ENCODE measurements at regions of chr5 and their contacts with region 1.

Region 1: GRCh38 chr5:95178046-95178651 is 106.7 kb downstream of the MCTP1 start:
- DNase-seq: peak; percentile 91
- H3K4me3 ChIP-seq: no peak overlapping the region
- H3K27ac ChIP-seq: peak overlapping the region; percentile 28
- H3K4me1 ChIP-seq: peaks cover 5% of the 10 kb centered on the region
- H3K27me3 ChIP-seq: no peaks in the 10 kb centered on the region
- CTCF ChIP-seq: peak; percentile 53 to 70
- POLR2A ChIP-seq: no peak

Region 2: GRCh38 chr5:95027151-95027721 is 150.9 kb before region 1 on chr5:
- CTCF ChIA-PET with region 1: interaction called, 5 read pairs
- POLR2A ChIA-PET with region 1: no interaction called
- dilution Hi-C with region 1: no loop called
- intact Hi-C with region 1: loop called (anchors 5 kb)
- DNase-seq: peak; percentile 44
- H3K4me3 ChIP-seq: no peak overlapping the region
- H3K27ac ChIP-seq: no peak overlapping the region
- H3K4me1 ChIP-seq: peaks cover 33% of the 10 kb centered on the region
- H3K27me3 ChIP-seq: no peaks in the 10 kb centered on the region
- CTCF ChIP-seq: no peak
- POLR2A ChIP-seq: no peak

Region 3: DNA sequence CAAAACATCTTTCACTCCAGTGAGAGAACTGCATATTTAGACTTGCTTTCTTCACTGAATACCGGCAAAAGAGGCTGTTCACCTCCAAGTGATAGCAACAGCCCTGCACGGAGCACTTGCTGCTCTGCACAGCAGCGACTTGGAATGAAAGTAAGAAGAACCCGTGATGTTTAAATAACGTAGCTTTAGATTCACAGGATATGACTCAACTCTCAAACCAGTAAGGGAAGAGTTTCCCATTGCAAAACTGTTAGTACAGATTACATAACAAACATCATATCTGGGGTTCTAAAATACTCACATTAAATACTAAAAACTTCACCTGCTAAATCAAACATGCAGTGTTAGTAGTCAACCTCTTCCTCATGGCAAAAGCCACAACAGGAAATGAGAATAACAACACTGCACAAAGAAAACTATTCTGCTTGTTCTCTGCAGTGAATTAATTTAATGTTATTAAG is 96.6 kb before region 1 on chr5:
- CTCF ChIA-PET with region 1: interaction called, 8 read pairs
- POLR2A ChIA-PET with region 1: no interaction called
- dilution Hi-C with region 1: no loop called
- intact Hi-C with region 1: loop called (anchors 1 kb)
- DNase-seq: peak; percentile 93
- H3K4me3 ChIP-seq: peak overlapping the region; percentile 66 to 100 (median 80)
- H3K27ac ChIP-seq: peak overlapping the region; percentile 69
- H3K4me1 ChIP-seq: peaks cover 45% of the 10 kb centered on the region
- H3K27me3 ChIP-seq: no peaks in the 10 kb centered on the region
- CTCF ChIP-seq: no peak
- POLR2A ChIP-seq: peak; percentile 98

Region 4: GRCh38 chr5:95142145-95142544 is 36.0 kb before region 1 on chr5:
- CTCF ChIA-PET with region 1: interaction called, 3 read pairs
- POLR2A ChIA-PET with region 1: no interaction called
- dilution Hi-C with region 1: no loop called
- intact Hi-C with region 1: loop called (anchors 1 kb)
- DNase-seq: peak; percentile 81
- H3K4me3 ChIP-seq: no peak overlapping the region
- H3K27ac ChIP-seq: no peak overlapping the region
- H3K4me1 ChIP-seq: peaks cover 27% of the 10 kb centered on the region
- H3K27me3 ChIP-seq: no peaks in the 10 kb centered on the region
- CTCF ChIP-seq: no peak
- POLR2A ChIP-seq: no peak

Region 5: DNA sequence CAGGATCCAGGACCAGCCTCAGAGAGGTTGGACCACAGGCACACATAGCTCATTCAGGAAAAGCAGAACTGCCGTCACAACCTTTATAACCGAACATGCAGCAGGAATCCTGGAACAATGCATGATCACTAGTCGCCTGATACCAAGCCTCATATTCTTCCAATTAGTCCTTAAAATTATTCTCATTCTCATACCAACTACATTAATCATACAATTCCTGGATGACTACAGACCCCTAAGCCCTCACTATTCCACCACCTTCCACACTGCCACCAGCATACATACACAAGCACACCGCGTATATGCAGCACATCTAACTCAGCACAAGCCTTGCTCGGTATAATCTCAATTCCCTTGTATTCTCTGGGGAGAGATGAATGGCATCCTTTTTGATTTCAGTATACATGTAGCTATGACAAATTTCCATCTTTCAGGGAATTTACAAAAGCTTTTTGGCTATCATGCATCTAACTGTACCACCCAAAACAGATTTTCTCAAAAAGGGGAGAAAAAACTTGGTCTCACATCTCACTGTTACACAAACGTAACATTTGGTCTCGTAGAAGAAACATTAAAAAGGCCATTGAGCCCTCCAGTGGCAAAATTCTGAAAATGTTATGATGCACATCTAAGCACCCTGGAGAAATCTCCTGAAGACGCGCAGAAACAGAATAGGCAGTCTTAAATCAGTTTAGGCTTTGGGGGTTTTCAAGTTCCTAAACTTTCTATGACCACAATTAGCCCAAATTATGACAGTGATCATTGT is 60.6 kb after region 1 on chr5:
- CTCF ChIA-PET with region 1: interaction called, 4 read pairs
- POLR2A ChIA-PET with region 1: no interaction called
- dilution Hi-C with region 1: no loop called
- intact Hi-C with region 1: loop called (anchors 1 kb)
- DNase-seq: peak; percentile 68
- H3K4me3 ChIP-seq: no peak overlapping the region
- H3K27ac ChIP-seq: peak overlapping the region; percentile 82
- H3K4me1 ChIP-seq: peaks cover 32% of the 10 kb centered on the region
- H3K27me3 ChIP-seq: no peaks in the 10 kb centered on the region
- CTCF ChIP-seq: peak; percentile 11 to 30
- POLR2A ChIP-seq: no peak

Region 6: DNA sequence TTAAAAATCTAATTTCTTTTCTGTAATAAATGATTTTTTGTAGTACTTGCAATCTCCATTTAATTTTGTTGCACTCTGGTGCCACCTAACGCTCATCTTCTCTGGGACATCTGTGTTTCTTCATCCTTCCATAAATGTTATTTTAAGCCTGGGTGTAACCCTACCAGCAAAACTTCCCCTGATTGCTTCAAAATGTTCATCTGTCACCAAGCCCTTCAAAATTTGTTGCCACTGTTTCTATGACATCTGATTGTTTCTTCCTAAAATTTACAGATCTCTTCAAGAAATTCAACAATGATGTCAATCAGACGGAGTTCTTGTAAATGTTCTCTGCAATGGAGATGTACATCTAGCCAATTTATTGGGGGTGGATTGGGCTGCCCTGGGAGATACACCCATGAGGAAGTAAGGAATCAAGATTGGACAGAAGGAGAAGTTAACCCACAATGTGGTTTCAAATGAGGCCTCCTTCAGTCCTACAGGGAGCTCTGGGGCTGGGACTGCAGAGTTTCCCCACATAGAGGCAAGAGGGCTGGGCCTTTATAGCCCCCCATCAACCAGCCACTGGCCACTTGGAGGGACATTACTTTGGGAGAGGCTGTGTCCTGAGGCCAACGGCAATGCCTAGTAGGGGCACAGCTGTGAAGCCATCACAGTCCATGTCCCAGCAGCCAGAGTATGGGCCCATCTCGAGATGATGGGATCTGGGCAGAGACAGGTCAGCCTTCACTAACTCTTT is 83.5 kb after region 1 on chr5:
- CTCF ChIA-PET with region 1: interaction called, 3 read pairs
- POLR2A ChIA-PET with region 1: no interaction called
- dilution Hi-C with region 1: no loop called
- intact Hi-C with region 1: loop called (anchors 1 kb)
- DNase-seq: peak; percentile 72
- H3K4me3 ChIP-seq: no peak overlapping the region
- H3K27ac ChIP-seq: no peak overlapping the region
- H3K4me1 ChIP-seq: peaks cover 4% of the 10 kb centered on the region
- H3K27me3 ChIP-seq: peaks cover 3 to 8% of the 10 kb centered on the region in 2 experiments
- CTCF ChIP-seq: peak; percentile 39 to 41
- POLR2A ChIP-seq: no peak

Measured in endothelial cell of umbilical vein (primary cell).